Mammary epithelial cell (primary cell): ENCODE measurements at regions of chr4 and their contacts with region 1.

Region 1: DNA sequence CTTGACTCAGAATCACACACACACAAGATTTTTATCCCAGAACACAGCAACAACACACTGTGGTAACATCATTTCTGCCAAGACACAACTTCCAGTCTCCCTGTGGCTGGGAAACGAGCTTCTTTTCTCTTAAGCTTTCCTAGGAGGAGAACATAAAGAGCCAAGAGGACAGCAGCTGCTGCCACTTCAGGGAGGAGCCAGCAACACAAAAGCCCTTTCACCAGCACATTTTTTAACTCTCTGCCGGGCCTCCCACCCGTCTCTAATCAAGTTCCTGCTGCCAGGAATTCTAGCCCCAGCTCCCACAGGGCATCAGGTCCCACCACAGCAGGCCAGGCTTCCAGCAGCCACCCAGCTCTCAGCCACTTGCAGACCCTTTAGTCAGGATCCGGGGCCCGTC is 22.4 kb downstream of the FAT1 start:
- DNase-seq: no peak
- H3K4me3 ChIP-seq: peak overlapping the region in 1 of 3 experiments; percentile 12
- H3K27ac ChIP-seq: peak overlapping the region; percentile 77
- H3K4me1 ChIP-seq: peaks cover 47% of the 10 kb centered on the region
- H3K27me3 ChIP-seq: no peaks in the 10 kb centered on the region
- CTCF ChIP-seq: no peak

Region 2: DNA sequence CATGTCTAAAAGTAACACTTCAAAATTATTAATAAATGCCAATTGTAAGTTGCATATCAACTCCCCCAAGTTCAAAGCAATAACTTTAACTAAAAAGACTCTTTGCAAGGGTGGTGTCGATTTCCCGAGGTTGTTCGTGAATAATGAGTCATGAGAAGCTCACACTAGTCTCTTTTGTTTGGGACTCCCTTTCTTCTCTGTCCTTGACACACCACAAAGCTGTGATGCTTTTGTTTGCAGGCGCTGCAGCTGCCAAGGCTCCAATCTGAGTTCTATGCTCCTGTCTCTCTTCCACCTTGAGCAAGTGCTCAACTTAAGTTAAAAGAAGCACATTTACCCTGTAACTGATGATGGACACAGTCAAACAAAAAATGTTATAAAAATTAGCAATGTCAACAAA is 43.5 kb before region 1 on chr4:
- CTCF ChIA-PET with region 1: no interaction called
- dilution Hi-C with region 1: loop called (anchors 5 kb)
- in situ Hi-C with region 1: no loop called
- intact Hi-C with region 1: no loop called
- DNase-seq: peak; percentile 73
- H3K4me3 ChIP-seq: no peak overlapping the region
- H3K27ac ChIP-seq: no peak overlapping the region
- H3K4me1 ChIP-seq: peaks cover 19% of the 10 kb centered on the region
- H3K27me3 ChIP-seq: no peaks in the 10 kb centered on the region
- CTCF ChIP-seq: no peak